Prostate gland (tissue), 2 donors: ENCODE measurements at regions of chr1 and their contacts with region 1.

Region 1: GRCh38 chr1:52141513-52142219 is at the start of gene ZFYVE9:
- DNase-seq: peak; percentile 59
- H3K4me3 ChIP-seq: peak within 1 kb of the TSS; percentile 85 to 95
- H3K27ac ChIP-seq: peak within 1 kb of the TSS; percentile 94 to 97
- H3K4me1 ChIP-seq: no peaks in the 10 kb centered on the region
- H3K27me3 ChIP-seq: no peaks in the 10 kb centered on the region
- CTCF ChIP-seq: peak; percentile 58 to 91 (median 82)
- POLR2A ChIP-seq: peak; percentile 26
- total RNA-seq, gene ZFYVE9: 28.6 to 29.0 TPM

Region 2: GRCh38 chr1:52268372-52268771 is 126.7 kb after region 1 on chr1:
- intact Hi-C with region 1: loop called (anchors 10 kb)
- DNase-seq: no peak
- H3K4me3 ChIP-seq: no peak overlapping the region
- H3K27ac ChIP-seq: no peak overlapping the region
- H3K4me1 ChIP-seq: no peaks in the 10 kb centered on the region
- H3K27me3 ChIP-seq: no peaks in the 10 kb centered on the region
- CTCF ChIP-seq: no peak
- POLR2A ChIP-seq: no peak

Region 3: DNA sequence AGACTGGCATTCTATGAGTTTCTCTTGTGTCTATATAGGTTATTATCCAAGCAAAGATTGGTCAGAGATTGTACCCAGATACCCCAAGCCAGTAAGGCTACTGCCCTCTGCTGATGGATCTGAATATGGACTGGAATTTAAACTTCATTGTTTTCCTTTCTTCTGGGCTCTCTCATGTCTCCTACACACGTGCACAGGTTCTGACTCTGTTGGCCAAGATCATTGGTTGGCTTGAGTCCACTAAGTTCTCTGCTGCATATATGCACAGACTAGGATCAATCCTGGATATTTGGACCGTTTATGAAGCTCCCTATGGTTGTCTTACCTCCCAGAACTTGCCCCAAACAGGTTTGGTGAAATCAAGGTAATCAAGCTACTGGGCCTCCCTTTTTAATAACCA is 154.7 kb after region 1 on chr1:
- intact Hi-C with region 1: loop called (anchors 5 kb)
- DNase-seq: no peak
- H3K4me3 ChIP-seq: no peak overlapping the region
- H3K27ac ChIP-seq: no peak overlapping the region
- H3K4me1 ChIP-seq: no peaks in the 10 kb centered on the region
- H3K27me3 ChIP-seq: no peaks in the 10 kb centered on the region
- CTCF ChIP-seq: peak in 3 of 4 experiments; percentile 44 to 73 (median 63)
- POLR2A ChIP-seq: no peak

Region 4: DNA sequence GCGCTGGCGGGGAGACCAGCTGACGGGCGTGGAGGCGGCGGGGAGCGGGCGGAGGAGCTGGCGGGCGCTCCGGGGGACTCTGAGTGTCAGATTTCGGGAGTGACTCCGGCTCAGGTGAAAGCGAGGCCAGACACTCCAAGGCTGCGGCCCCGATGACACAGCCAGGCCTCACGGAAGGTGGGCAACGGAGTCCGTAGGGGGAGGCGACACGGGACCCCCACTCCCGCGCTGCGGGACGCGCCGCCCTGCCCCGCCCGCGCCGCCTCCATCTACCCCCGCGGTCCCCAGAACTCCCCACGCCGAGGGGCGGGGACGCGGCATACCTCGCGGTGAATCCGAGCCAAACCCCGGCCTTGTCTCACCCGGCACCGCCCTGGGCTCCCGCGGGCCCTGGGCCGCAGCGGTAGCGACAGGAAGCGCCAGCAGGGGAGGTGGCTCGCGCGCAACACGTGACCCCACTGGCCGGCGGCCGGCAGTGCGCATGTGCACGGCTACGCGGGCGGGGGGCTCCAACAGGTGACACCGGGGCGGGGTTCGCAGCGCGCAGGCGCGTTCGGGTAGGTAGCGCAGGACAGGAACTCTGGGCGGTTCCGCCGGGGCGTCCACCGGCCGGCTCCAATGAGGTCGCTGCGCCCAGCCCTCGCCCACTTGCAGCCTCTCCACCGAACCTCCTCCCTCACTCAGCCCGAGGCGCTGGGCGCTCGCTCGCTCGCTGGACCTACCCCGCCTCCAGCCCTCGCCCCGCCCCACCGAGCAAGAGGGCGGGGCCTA is 224.3 kb after region 1 on chr1 and contains the start of gene CC2D1B:
- intact Hi-C with region 1: loop called (anchors 10 kb)
- DNase-seq: peak; percentile 99
- H3K4me3 ChIP-seq: peak within 1 kb of the TSS; percentile 91 to 97
- H3K27ac ChIP-seq: peak within 1 kb of the TSS; percentile 94
- H3K4me1 ChIP-seq: no peaks in the 10 kb centered on the region
- H3K27me3 ChIP-seq: no peaks in the 10 kb centered on the region
- CTCF ChIP-seq: peak; percentile 24 to 86 (median 48)
- POLR2A ChIP-seq: peak; percentile 90
- total RNA-seq, gene CC2D1B: 24.2 to 43.9 TPM

Region 5: DNA sequence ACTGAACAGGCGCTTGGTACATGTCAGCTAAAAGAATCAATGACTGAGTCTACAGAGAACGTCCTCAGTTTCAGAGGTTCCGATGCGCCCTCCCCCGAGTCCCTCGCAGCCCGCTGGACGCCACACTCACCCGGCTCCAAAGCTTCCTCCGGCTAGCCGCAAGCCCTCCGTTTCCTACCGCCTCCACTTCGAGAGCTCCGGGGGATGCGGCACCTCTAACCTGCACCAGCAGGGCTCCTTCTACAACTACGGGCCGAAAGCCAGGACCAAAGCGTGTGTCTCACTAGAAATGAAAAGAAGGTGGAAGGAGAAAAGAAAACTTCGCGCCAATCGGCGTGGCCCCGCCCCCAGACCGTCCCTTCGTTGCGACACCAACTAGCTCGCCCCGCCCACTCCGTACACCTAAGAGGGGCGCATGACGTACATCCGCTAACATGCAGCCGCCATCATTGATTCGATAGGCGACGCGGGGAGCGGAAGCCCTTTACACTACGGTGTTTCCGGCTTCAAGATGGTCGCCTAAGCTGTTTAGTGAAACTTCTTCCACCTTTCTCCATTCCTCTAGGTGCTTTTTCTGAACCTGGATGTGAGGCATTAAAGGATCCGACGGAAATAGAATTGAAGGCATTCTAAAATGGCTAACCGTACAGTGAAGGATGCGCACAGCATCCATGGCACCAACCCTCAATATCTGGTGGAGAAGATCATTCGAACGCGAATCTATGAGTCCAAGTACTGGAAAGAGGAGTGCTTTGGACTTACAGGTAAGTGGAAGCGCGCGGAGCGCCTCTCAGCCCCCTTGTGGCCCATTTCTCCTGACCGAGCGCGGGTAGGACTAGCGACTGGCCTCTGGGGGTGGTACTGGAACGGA is 262.7 kb after region 1 on chr1 and contains the starts of genes ORC1 and PRPF38A:
- intact Hi-C with region 1: loop called (anchors 10 kb)
- DNase-seq: peak; percentile 99
- H3K4me3 ChIP-seq: peak within 1 kb of the TSS; percentile 57 to 65
- H3K27ac ChIP-seq: peak within 1 kb of the TSS; percentile 83 to 85
- H3K4me1 ChIP-seq: no peaks in the 10 kb centered on the region
- H3K27me3 ChIP-seq: no peaks in the 10 kb centered on the region
- CTCF ChIP-seq: peak in 2 of 4 experiments; percentile 53 to 56
- POLR2A ChIP-seq: peak; percentile 50
- total RNA-seq, gene ORC1: 2.2 to 3.3 TPM
- total RNA-seq, gene PRPF38A: 15.3 to 24.8 TPM